Activated naive CD4-positive, alpha-beta T cell treated with anti-CD3 and anti-CD28 coated beads, Interleukin-2, amount 10 ng/mL, durations not matched to agents 7 days and 5 days (primary cell): ENCODE measurements at regions of chr16 and their contacts with region 1.

Region 1: DNA sequence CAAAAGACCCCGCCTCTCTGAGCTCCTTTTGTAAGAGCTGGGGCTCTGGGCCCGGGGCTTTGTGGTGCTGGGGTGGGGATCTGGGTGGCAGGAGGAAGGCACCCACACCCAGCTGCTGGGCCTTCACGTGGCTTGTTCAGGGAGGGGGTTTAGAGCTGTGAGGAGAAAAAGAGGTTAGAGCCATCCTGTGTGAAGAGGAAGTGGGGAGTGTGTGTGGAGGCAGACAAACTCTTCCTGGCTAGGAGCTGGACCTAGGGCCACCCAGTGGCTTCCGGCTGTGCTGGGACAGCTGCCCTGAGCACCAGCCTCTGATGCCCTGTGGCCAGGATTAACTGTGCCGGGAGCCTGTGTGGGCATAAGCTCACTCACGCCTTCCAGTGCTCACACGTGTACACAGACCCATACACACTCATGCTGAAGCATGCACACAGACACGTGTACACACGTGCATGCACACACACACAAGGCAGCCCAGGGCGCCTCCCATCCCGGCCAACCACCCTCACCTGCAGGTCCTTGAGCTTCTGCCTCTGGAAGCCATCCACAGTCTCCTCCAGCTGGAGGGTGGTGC is 7.4 kb downstream of the CIBAR2 start:
- DNase-seq: peak; percentile 58
- H3K4me3 Mint-ChIP-seq: no peak overlapping the region
- H3K27ac Mint-ChIP-seq: peak overlapping the region; percentile 89
- H3K4me1 Mint-ChIP-seq: peaks cover 40% of the 10 kb centered on the region
- H3K27me3 Mint-ChIP-seq: peaks cover 4% of the 10 kb centered on the region

Region 2: DNA sequence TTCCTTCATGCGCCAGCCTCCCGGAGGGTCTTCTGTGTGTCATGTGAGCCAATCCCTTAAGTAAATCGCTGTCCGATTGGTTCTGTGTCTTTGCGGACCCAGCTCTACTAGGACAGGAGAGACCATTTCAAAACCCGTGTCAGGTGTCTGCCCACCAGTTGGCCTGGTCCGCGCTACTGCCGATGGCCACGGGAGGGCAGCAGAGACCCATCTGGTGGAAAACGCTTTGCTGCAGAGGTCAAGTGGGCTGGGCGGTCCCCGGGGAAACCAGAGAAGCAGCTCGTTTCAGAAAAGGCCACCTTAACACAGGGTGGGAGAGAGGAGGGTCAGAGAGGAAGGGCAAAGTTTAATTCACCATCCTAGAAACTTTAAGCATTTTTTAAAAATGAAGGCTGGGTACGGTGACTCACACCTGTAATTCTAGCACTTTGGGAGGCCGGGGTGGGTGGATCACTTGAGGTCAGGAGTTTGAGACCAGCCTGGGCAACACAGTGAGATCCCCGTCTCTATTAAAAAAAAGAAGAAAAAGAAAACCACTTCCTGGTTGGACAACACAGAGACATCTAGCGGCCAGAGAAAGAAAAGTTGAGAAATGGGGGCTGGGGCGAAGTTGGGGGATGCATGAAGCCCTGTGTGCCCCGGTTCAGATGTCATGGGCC is 10.1 kb after region 1 on chr16:
- CTCF ChIA-PET with region 1: interaction called, 11 read pairs
- DNase-seq: peak; percentile 87
- H3K4me3 Mint-ChIP-seq: peak overlapping the region; percentile 33
- H3K27ac Mint-ChIP-seq: peak overlapping the region; percentile 22
- H3K4me1 Mint-ChIP-seq: peaks cover 14% of the 10 kb centered on the region
- H3K27me3 Mint-ChIP-seq: peaks cover 7% of the 10 kb centered on the region